PC-3 (cell line): ENCODE measurements at regions of chr13 and their contacts with region 1.

Region 1: DNA sequence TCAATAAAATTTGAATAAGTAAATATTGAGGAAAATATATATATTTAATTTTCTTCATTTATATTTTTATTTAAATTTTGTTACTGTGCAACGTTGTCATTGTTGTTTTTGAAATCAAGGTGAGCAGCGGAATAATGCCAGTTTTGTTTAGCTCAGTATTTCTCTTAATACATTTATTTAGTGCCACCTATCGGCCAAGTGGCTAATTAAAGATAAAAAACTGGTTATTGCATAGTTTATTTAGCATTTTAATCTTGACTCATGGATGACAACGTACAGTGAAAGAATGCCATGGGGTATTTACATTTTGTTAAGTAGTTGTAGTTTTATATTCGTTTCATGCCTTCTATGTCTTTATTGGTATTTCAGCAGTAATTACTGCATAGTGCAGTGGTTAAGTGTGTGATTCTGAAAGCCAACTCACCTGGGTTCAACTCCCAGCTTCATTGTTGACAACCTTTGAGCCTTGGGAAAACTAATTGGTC is 265.9 kb downstream of the MYO16 start:
- DNase-seq: peak; percentile 88
- ATAC-seq: peak; percentile 63
- H3K4me3 ChIP-seq: no peak overlapping the region
- H3K27ac ChIP-seq: no peak overlapping the region
- H3K4me1 ChIP-seq: peaks cover 10% of the 10 kb centered on the region
- H3K27me3 ChIP-seq: 0 out of 2 replicates have a peak, but pooled peaks cover 7% of the 10 kb centered on the region
- CTCF ChIP-seq: peak; percentile 55

Region 2: GRCh38 chr13:108227651-108228272 is 667.5 kb before region 1 on chr13:
- CTCF ChIA-PET with region 1: no interaction called
- POLR2A ChIA-PET with region 1: no interaction called
- intact Hi-C with region 1: loop called (anchors 5 kb)
- DNase-seq: peak; percentile 67
- ATAC-seq: peak; percentile 18; the same call in 1 of the 2 replicates
- H3K4me3 ChIP-seq: no peak overlapping the region
- H3K27ac ChIP-seq: no peak overlapping the region
- H3K4me1 ChIP-seq: peaks cover 17% of the 10 kb centered on the region
- H3K27me3 ChIP-seq: no peaks in the 10 kb centered on the region
- CTCF ChIP-seq: peak; percentile 83

Region 3: DNA sequence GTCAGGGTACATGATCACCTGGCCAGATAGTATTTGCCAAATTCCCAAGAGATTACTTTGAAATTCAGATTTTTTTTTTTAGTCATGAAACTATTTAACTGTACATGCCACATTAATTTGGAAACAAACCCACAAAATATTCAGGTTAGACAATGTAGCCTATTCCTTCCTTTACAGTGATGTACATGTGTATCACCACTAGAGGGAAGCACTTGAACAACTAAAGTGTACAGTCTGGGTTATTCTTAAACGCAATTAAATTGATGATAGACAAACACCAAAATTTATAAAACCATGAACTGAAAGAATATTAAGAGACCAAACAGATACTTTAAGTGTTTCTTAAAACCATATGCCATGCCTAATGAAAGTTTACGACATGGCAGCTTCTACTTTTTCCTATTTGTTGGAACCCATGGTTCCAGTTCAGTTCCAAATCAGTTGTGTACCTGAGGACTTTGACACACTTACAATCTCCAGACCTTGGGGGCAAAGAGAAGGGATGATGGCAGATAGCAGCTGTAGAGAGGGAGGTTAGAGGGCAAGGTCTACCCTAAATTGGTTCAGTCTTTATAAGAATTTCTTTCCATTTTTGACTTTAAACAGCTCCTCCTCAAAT is 572.9 kb before region 1 on chr13:
- CTCF ChIA-PET with region 1: no interaction called
- POLR2A ChIA-PET with region 1: no interaction called
- intact Hi-C with region 1: loop called (anchors 1 kb)
- DNase-seq: peak; percentile 60
- ATAC-seq: peak; percentile 86
- H3K4me3 ChIP-seq: no peak overlapping the region
- H3K27ac ChIP-seq: no peak overlapping the region
- H3K4me1 ChIP-seq: no peaks in the 10 kb centered on the region
- H3K27me3 ChIP-seq: peaks cover 43% of the 10 kb centered on the region
- CTCF ChIP-seq: peak; percentile 81

Region 4: GRCh38 chr13:108342369-108343289 is 552.6 kb before region 1 on chr13:
- CTCF ChIA-PET with region 1: interaction called, 7 read pairs
- POLR2A ChIA-PET with region 1: no interaction called
- intact Hi-C with region 1: loop called (anchors 1 kb)
- DNase-seq: peak; percentile 49
- ATAC-seq: peak; percentile 58
- H3K4me3 ChIP-seq: no peak overlapping the region
- H3K27ac ChIP-seq: no peak overlapping the region
- H3K4me1 ChIP-seq: no peaks in the 10 kb centered on the region
- H3K27me3 ChIP-seq: peaks cover 55% of the 10 kb centered on the region
- CTCF ChIP-seq: peak; percentile 66

Region 5: DNA sequence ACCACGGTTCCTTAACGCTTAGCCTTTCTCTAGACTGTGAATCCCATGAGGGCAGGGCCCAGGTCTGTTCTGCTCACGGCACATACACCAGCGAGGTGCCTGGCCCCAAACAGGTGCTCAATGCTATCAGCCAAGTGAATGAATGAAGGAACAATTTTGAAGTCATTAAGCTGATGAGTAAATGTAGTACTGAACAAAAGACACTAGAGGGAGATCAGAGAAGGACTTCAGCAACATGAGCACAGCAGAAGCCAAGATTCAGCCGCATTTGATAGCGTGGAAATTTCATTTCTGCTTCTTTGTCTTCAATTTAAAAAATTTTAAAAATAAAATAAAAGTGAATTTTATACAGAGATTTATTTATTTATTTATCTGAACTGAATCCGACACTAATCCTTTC is 285.9 kb before region 1 on chr13:
- CTCF ChIA-PET with region 1: interaction called, 9 read pairs
- POLR2A ChIA-PET with region 1: no interaction called
- intact Hi-C with region 1: loop called (anchors 1 kb)
- DNase-seq: peak; percentile 57
- ATAC-seq: no peak
- H3K4me3 ChIP-seq: no peak overlapping the region
- H3K27ac ChIP-seq: no peak overlapping the region
- H3K4me1 ChIP-seq: no peaks in the 10 kb centered on the region
- H3K27me3 ChIP-seq: no peaks in the 10 kb centered on the region
- CTCF ChIP-seq: peak; percentile 47